Heart right ventricle (tissue), 16 donors: ENCODE measurements at regions of chr9 and their contacts with region 1.

Region 1: GRCh38 chr9:79571309-79572031 is at the start of gene TLE4:
- DNase-seq: peak; percentile 98 to 100
- ATAC-seq: peak; percentile 95 to 99 (median 98)
- H3K4me3 ChIP-seq: peak within 1 kb of the TSS; percentile 74 to 98 (median 95)
- H3K27ac ChIP-seq: peak within 1 kb of the TSS; percentile 34 to 96 (median 93)
- H3K4me1 ChIP-seq: peaks cover 0 to 48% (median 33%) of the 10 kb centered on the region in 9 donors
- H3K27me3 ChIP-seq: peaks cover 0 to 16% (median 0%) of the 10 kb centered on the region in 7 donors
- CTCF ChIP-seq: no peak
- total RNA-seq, gene TLE4: 9.5 to 17.3 (median 13.1) TPM

Region 2: DNA sequence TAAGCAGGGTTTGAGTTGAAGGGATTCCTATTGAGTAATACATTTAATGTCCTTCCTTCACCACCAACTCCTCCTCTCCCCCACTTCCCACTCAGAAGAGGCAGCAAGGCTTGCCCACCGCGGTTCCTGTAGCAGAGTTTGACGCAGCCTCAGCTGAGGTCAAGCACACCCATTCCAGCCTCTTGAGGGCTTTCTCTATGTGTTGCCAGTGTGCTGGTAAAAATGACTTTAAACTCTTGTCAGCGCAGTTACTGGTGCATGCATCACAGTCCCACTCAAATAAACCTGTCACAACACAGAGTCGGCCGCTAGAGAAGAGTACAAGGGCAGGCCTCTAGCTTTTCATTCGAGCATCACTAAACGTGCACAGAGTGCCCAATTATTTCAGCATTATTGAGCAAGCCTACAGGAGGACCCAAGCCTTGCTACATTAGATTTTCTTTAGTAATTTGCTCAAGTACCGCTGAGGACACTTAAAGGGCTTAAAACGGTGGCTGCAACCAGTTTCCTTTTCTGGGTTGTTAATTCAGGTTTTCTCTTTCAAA is 79.9 kb after region 1 on chr9:
- intact Hi-C with region 1: loop called in 1 of 10 experiments (anchors 10 kb)
- DNase-seq: no peak
- ATAC-seq: peak in 1 of 8 donors; percentile 49
- H3K4me3 ChIP-seq: no peak overlapping the region
- H3K27ac ChIP-seq: peak overlapping the region in 1 of 10 donors; percentile 23
- H3K4me1 ChIP-seq: peaks cover 0 to 8% (median 0%) of the 10 kb centered on the region in 9 donors
- H3K27me3 ChIP-seq: no peaks in the 10 kb centered on the region
- CTCF ChIP-seq: no peak

Region 3: DNA sequence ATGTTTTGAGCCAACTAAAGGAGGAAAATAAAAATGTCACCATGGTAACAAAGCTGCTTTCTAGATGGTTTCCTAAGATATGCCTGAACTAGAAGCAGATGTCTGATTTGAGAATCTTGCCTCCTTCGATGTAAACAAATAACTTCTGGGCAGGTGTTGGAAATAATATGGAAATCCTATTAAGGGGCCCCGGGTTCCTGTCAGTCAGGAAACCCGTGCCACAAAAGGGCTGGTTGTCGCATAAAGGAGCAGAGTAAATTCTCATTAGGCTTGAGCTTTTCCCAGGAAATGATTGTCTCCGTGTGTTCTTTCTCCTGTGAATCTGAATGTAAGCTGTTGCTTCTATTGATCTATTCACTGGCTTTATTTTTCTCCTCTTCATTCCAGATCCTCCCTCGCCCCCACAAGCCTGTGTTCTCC is 91.1 kb after region 1 on chr9:
- intact Hi-C with region 1: loop called in 5 of 10 experiments (anchors 1 to 10 kb)
- DNase-seq: no peak
- ATAC-seq: peak in 3 of 8 donors; percentile 21 to 53 (median 45)
- H3K4me3 ChIP-seq: peak overlapping the region in 1 of 10 donors; percentile 12
- H3K27ac ChIP-seq: peak overlapping the region in 5 of 10 donors; percentile 3 to 43 (median 31)
- H3K4me1 ChIP-seq: peaks cover 0 to 43% (median 35%) of the 10 kb centered on the region in 9 donors
- H3K27me3 ChIP-seq: no peaks in the 10 kb centered on the region
- CTCF ChIP-seq: no peak

Region 4: GRCh38 chr9:79686381-79687130 is 115.1 kb after region 1 on chr9:
- intact Hi-C with region 1: loop called in 1 of 10 experiments (anchors 10 kb)
- DNase-seq: no peak
- ATAC-seq: peak in 5 of 8 donors; percentile 44 to 79 (median 62)
- H3K4me3 ChIP-seq: no peak overlapping the region
- H3K27ac ChIP-seq: peak overlapping the region in 1 of 10 donors; percentile 19
- H3K4me1 ChIP-seq: peaks cover 0 to 29% (median 10%) of the 10 kb centered on the region in 9 donors
- H3K27me3 ChIP-seq: no peaks in the 10 kb centered on the region
- CTCF ChIP-seq: no peak

Region 5: DNA sequence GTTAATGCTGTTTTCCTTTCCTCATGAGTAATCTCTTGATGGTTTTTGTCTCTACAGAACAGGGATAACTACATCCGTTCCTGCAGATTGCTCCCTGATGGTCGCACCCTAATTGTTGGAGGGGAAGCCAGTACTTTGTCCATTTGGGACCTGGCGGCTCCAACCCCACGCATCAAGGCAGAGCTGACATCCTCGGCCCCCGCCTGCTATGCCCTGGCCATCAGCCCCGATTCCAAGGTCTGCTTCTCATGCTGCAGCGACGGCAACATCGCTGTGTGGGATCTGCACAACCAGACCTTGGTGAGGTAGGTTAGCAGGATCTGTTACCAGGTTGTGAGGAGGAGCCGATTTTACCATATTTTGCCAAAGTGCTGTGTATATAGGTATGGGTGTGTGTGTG is 148.5 kb after region 1 on chr9:
- intact Hi-C with region 1: loop called in 2 of 10 experiments (anchors 10 kb)
- DNase-seq: no peak
- ATAC-seq: no peak
- H3K4me3 ChIP-seq: no peak overlapping the region
- H3K27ac ChIP-seq: no peak overlapping the region
- H3K4me1 ChIP-seq: no peaks in the 10 kb centered on the region
- H3K27me3 ChIP-seq: no peaks in the 10 kb centered on the region
- CTCF ChIP-seq: no peak

Region 6: DNA sequence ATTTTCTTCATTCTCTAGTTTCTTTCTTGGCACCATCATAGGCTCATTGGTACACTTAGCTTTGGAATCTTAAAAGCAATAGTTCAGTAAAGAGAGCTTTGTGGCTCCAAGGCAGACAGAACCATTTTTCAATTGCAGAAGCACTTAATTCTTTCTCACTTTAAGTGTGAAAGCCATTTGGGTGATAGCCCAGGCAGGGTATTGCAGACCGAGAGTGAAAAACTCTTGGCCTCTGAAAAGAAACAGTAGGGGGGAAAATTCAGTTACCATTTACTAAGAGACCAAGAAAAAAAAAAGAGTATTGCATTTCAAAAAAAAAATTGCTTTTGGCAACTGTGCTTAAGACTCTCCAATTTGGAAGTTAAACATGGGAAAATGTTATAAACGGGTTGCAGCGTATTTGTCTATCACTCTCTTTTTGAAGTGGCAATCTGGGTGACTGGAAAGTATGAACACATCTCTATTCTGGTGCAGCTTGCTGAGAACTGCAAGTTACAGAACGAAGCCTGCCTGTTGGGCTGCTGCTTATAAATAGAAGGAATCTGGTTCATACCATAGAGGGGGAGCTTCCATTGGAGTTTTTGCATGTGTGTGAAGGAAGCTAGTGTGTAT is 170.7 kb after region 1 on chr9:
- intact Hi-C with region 1: loop called in 1 of 10 experiments (anchors 10 kb)
- DNase-seq: peak in 1 of 2 donors; percentile 38
- ATAC-seq: peak; percentile 55 to 98 (median 93)
- H3K4me3 ChIP-seq: no peak overlapping the region
- H3K27ac ChIP-seq: peak overlapping the region in 6 of 10 donors; percentile 64 to 78 (median 72)
- H3K4me1 ChIP-seq: peaks cover 0 to 19% (median 0%) of the 10 kb centered on the region in 9 donors
- H3K27me3 ChIP-seq: no peaks in the 10 kb centered on the region
- CTCF ChIP-seq: no peak

Region 7: DNA sequence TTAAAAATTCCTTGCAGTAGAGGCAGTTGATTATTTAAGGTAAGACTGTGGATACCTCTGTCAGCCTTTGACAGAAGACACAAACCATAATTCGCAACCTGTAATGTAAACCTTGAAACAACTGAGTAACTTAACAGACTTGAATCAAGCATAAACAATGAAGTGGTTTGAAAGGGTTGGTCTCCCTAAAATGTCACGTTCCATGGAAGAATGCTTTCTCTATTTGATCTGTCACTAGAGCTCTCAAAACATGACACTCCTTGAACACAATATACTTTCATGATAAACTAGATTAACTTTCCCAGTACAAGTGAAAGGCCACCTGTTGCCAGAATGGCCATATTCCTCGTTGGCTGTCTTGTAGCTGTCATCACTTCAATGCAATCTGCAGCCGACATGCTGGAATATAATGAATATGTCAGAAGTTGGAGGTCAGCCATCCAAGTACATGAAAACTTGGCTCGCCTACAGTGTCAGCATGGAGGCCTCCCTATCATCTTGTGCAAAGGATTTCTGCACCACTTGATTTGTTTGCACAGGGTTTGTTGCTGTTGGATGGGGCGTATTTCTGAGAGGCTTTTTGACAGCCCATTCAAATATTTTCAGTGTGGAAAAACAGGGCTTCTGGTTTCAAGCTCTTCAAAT is 228.3 kb after region 1 on chr9:
- intact Hi-C with region 1: loop called in 1 of 10 experiments (anchors 5 kb)
- DNase-seq: peak in 1 of 2 donors; percentile 66
- ATAC-seq: peak; percentile 64 to 97 (median 92)
- H3K4me3 ChIP-seq: no peak overlapping the region
- H3K27ac ChIP-seq: no peak overlapping the region
- H3K4me1 ChIP-seq: peaks cover 0 to 19% (median 7%) of the 10 kb centered on the region in 9 donors
- H3K27me3 ChIP-seq: no peaks in the 10 kb centered on the region
- CTCF ChIP-seq: no peak